ENCODE measurements at regions of chr1 and their contacts with region 1.

Region 1: DNA sequence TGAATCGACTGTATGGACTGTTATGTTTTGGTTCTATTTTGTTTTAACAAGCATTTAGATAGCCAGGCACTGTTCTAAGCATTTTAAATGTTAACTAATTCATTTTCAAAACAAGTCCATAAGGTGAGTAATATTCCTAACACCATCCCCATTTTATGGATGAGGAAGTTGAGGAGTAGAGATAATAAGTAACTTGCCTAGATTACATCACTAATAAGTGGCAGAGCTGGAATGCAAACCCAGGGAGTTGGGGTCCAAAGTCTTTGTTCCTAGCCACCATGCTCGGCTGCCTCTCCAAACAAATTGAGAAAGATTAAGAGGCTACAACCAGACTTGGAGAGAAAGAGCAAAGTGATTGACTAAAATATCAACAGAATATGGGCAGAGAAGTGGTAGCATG is 12.6 kb upstream of the LEPR start:
- DNase-seq: no peak
- H3K4me3 ChIP-seq: no peak overlapping the region
- H3K27ac ChIP-seq: no peak overlapping the region
- H3K4me1 ChIP-seq: no peaks in the 10 kb centered on the region
- H3K27me3 ChIP-seq: no peaks in the 10 kb centered on the region
- CTCF ChIP-seq: no peak
- POLR2A ChIP-seq: no peak

Region 2: DNA sequence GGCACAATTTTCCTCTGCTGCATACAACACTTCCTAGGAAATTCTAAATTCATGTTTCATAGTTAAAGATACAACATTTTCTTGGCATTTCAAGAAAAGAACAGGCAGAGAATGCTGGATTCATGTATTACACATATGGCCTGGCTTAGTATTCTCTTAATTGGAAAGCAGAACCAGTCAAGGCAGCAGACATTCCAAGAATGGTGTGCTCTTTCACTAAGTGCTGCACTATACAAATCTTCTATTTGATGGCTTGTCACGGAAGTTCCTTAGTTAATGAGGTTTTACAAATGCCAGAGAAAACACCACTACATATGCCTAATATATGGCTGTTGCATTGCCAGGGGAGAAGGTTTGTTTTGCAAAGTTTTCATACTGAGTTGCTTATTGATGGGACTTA is 1263.6 kb after region 1 on chr1:
- intact Hi-C with region 1: loop called (anchors 5 kb)
- DNase-seq: no peak
- H3K4me3 ChIP-seq: no peak overlapping the region
- H3K27ac ChIP-seq: no peak overlapping the region
- H3K4me1 ChIP-seq: no peaks in the 10 kb centered on the region
- H3K27me3 ChIP-seq: no peaks in the 10 kb centered on the region
- CTCF ChIP-seq: no peak
- POLR2A ChIP-seq: no peak

Measured in breast epithelium (tissue), 4 donors.